CD8-positive, alpha-beta T cell (primary cell): ENCODE measurements at regions of chr5 and their contacts with region 1.

Region 1: DNA sequence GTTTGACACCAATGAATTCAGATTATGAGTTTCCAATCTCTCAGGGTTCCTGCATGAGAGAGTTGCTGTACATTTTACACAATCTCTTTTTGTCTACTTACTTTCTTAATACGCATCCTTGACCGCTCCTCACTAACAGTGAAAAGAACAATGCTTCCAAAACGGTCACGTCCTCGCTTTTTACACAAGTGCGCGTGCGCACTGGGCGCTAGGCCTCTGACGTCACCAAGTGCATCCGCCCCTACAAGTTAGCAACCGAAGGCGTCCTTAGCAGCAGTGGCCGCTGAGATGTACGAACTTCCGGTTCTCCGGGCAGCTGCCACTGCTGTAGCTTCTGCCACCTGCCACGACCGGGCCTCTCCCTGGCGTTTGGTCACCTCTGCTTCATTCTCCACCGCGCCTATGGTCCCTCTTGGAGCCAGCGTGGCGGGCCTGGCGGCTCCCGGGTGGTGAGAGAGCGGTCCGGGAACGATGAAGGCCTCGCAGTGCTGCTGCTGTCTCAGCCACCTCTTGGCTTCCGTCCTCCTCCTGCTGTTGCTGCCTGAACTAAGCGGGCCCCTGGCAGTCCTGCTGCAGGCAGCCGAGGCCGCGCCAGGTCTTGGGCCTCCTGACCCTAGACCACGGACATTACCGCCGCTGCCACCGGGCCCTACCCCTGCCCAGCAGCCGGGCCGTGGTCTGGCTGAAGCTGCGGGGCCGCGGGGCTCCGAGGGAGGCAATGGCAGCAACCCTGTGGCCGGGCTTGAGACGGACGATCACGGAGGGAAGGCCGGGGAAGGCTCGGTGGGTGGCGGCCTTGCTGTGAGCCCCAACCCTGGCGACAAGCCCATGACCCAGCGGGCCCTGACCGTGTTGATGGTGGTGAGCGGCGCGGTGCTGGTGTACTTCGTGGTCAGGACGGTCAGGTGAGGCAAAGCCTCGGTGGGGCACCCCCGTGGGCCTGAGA is at the start of gene FAM174A:
- DNase-seq: peak; percentile 88 to 98 (median 94)
- ATAC-seq: peak; percentile 86
- H3K4me3 ChIP-seq: peak within 1 kb of the TSS; percentile 92 to 93
- H3K4me3 Mint-ChIP-seq: peak within 1 kb of the TSS; percentile 88
- H3K27ac ChIP-seq: peak within 1 kb of the TSS; percentile 90 to 93
- H3K27ac Mint-ChIP-seq: peak within 1 kb of the TSS; percentile 96
- H3K4me1 ChIP-seq: peaks cover 16% of the 10 kb centered on the region
- H3K4me1 Mint-ChIP-seq: peaks cover 39% of the 10 kb centered on the region
- H3K27me3 ChIP-seq: no peaks in the 10 kb centered on the region
- H3K27me3 Mint-ChIP-seq: no peaks in the 10 kb centered on the region
- CTCF ChIP-seq: no peak
- total RNA-seq, gene FAM174A: 4.9 to 6.5 TPM

Region 2: GRCh38 chr5:100560860-100561259 is 25.5 kb after region 1 on chr5:
- CTCF ChIA-PET with region 1: no interaction called
- POLR2A ChIA-PET with region 1: no interaction called
- intact Hi-C with region 1: no loop called
- DNase-seq: no peak
- ATAC-seq: no peak
- H3K4me3 ChIP-seq: no peak overlapping the region
- H3K4me3 Mint-ChIP-seq: no peak overlapping the region
- H3K27ac ChIP-seq: no peak overlapping the region
- H3K27ac Mint-ChIP-seq: no peak overlapping the region
- H3K4me1 ChIP-seq: no peaks in the 10 kb centered on the region
- H3K4me1 Mint-ChIP-seq: peaks cover 18% of the 10 kb centered on the region
- H3K27me3 ChIP-seq: no peaks in the 10 kb centered on the region
- H3K27me3 Mint-ChIP-seq: no peaks in the 10 kb centered on the region
- CTCF ChIP-seq: no peak

Region 3: GRCh38 chr5:100777680-100778281 is 242.4 kb after region 1 on chr5:
- CTCF ChIA-PET with region 1: no interaction called
- POLR2A ChIA-PET with region 1: no interaction called
- intact Hi-C with region 1: loop called in 1 of 2 experiments (anchors 5 kb)
- DNase-seq: peak in 2 of 9 experiments; percentile 17 to 47
- ATAC-seq: peak; percentile 31
- H3K4me3 ChIP-seq: no peak overlapping the region
- H3K4me3 Mint-ChIP-seq: no peak overlapping the region
- H3K27ac ChIP-seq: no peak overlapping the region
- H3K27ac Mint-ChIP-seq: no peak overlapping the region
- H3K4me1 ChIP-seq: peaks cover 18% of the 10 kb centered on the region
- H3K4me1 Mint-ChIP-seq: peaks cover 27% of the 10 kb centered on the region
- H3K27me3 ChIP-seq: no peaks in the 10 kb centered on the region
- H3K27me3 Mint-ChIP-seq: no peaks in the 10 kb centered on the region
- CTCF ChIP-seq: no peak

Region 4: GRCh38 chr5:100803397-100803796 is 268.1 kb after region 1 on chr5:
- CTCF ChIA-PET with region 1: no interaction called
- POLR2A ChIA-PET with region 1: no interaction called
- intact Hi-C with region 1: no loop called
- DNase-seq: no peak
- ATAC-seq: no peak
- H3K4me3 ChIP-seq: no peak overlapping the region
- H3K4me3 Mint-ChIP-seq: no peak overlapping the region
- H3K27ac ChIP-seq: no peak overlapping the region
- H3K27ac Mint-ChIP-seq: no peak overlapping the region
- H3K4me1 ChIP-seq: no peaks in the 10 kb centered on the region
- H3K4me1 Mint-ChIP-seq: no peaks in the 10 kb centered on the region
- H3K27me3 ChIP-seq: no peaks in the 10 kb centered on the region
- H3K27me3 Mint-ChIP-seq: no peaks in the 10 kb centered on the region
- CTCF ChIP-seq: no peak